Transverse colon (tissue), 4 donors: ENCODE measurements at regions of chr1 and their contacts with region 1.

Region 1: GRCh38 chr1:208007938-208008342 is 97.0 kb upstream of the CD34 start:
- DNase-seq: no peak
- H3K4me3 ChIP-seq: no peak overlapping the region
- H3K27ac ChIP-seq: no peak overlapping the region
- H3K4me1 ChIP-seq: no peaks in the 10 kb centered on the region
- H3K27me3 ChIP-seq: no peaks in the 10 kb centered on the region
- CTCF ChIP-seq: no peak
- EP300 ChIP-seq: no peak
- POLR2A ChIP-seq: no peak

Region 2: DNA sequence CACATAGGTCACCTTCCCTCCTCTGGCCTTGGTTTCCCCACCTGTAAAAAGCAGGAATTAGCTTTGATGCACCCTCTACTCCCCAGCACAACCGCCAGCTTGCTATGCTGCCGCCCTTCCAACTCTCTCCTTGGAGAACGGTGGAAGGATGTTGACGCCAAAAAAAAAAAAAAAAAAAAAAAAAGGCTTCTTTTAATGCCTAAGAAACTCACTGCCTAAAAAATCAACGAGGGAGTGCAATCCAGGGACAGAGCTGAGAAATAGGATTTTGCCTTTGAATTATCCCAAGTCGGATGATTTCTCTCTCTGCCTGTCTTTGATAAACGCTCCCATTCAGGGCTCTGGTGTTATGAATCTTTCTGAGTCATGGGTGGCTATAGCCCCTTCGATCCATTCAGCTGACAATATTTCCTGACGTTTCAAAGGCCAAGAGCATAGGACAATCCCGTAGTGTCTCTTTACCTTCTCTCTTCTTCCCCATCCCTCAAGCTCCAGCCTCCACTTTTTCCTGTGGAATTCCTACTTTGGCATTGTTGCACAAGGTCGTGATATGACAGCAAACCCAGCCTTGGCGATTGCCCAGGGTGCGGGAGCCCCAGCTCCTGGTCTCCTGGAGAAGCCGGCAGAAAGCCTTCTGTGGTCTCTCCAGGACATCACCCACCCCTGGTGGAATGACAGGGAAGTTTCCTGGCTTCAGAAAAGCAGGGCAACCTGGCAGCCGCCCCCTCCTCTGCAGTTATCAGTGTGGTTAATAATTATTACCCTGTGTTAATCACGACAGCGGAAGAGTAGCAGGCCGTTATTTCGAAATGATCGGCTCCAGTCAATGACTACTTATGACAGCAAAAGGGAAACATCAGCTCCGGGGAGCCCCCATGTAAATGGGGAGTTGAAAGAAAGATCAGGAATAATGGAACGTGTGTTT is 244.2 kb after region 1 on chr1:
- in situ Hi-C with region 1: loop called in 1 of 4 experiments (anchors 10 kb)
- intact Hi-C with region 1: no loop called
- DNase-seq: no peak
- H3K4me3 ChIP-seq: no peak overlapping the region
- H3K27ac ChIP-seq: no peak overlapping the region
- H3K4me1 ChIP-seq: peaks cover 0 to 3% (median 0%) of the 10 kb centered on the region in 4 donors
- H3K27me3 ChIP-seq: peaks cover 16% of the 10 kb centered on the region
- CTCF ChIP-seq: peak in 3 of 5 experiments; percentile 35 to 37 (median 35)
- EP300 ChIP-seq: no peak
- POLR2A ChIP-seq: no peak

Region 3: GRCh38 chr1:209029737-209030136 is 1021.8 kb after region 1 on chr1:
- in situ Hi-C with region 1: no loop called
- intact Hi-C with region 1: loop called (anchors 10 kb)
- DNase-seq: no peak
- H3K4me3 ChIP-seq: no peak overlapping the region
- H3K27ac ChIP-seq: peak overlapping the region; percentile 19 to 69 (median 50)
- H3K4me1 ChIP-seq: peaks cover 0 to 19% (median 6%) of the 10 kb centered on the region in 4 donors
- H3K27me3 ChIP-seq: no peaks in the 10 kb centered on the region
- CTCF ChIP-seq: peak in 2 of 5 experiments; percentile 42 to 43
- EP300 ChIP-seq: no peak
- POLR2A ChIP-seq: no peak

Region 4: DNA sequence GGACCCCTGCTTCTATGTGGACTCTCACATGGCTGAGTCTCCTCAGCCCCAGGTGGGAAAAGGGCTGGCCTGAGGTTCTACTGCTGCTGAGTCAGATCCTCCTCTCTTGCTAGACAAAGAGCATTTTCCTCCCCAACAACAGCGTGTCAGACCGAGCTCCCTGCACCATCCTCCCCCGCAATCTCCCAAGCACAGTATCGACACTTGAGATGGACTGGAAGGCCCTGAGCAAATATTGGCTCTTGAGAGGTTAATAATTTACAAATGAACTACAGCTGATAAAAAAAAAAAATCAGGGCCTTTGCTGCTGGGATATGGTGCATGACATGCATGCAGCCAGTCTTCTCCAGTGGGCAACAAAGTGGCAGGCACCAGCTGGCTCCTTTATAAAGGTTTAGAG is 1520.1 kb after region 1 on chr1:
- in situ Hi-C with region 1: no loop called
- intact Hi-C with region 1: no loop called
- DNase-seq: no peak
- H3K4me3 ChIP-seq: no peak overlapping the region
- H3K27ac ChIP-seq: no peak overlapping the region
- H3K4me1 ChIP-seq: no peaks in the 10 kb centered on the region
- H3K27me3 ChIP-seq: no peaks in the 10 kb centered on the region
- CTCF ChIP-seq: no peak
- EP300 ChIP-seq: no peak
- POLR2A ChIP-seq: no peak